Transverse colon (tissue), 4 donors: ENCODE measurements at regions of chr5 and their contacts with region 1.

Region 1: DNA sequence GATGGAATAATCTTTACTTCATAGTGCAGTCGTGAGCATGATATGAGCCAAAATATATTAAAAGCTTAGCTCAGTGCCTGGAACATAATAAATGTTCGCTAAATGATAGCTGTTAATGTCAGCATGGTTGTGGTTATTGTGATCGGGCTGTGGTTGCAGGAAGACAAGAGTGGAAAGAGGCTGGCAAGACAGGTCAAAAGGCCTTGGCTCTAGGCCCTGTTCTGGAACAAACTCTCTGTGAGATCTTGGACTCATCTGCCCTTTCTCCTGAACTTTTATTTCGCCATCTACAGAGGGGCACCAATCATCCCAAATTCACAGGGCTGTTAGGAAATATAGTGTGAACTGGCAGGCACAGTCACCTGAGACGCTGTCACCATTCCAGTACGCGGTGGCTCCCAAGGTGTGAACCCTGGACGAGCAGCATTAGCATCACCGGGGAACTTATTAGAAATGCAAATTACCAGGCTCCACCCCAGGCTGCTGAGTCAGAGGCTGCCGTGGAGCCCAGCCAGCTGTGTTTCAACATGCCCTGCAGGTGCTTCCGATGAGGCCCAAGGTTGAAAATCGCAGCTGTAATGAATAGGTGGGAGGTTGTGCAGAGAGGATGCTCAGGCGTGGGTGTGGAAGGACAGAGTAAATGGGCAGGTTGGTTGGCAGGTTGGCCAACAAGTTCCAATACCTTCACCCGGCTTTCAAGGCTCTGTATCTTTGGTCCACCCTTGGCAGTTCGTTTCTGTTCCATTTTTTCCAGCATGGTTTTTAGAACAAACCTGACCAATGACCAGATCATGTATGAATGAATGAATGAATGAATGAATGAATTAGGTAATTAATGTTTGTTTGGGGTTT is 50.2 kb upstream of the SAP30L start:
- DNase-seq: peak; percentile 47
- H3K4me3 ChIP-seq: no peak overlapping the region
- H3K27ac ChIP-seq: no peak overlapping the region
- H3K4me1 ChIP-seq: peaks cover 0 to 19% (median 2%) of the 10 kb centered on the region in 4 donors
- H3K27me3 ChIP-seq: no peaks in the 10 kb centered on the region
- CTCF ChIP-seq: no peak
- EP300 ChIP-seq: no peak
- POLR2A ChIP-seq: no peak

Region 2: DNA sequence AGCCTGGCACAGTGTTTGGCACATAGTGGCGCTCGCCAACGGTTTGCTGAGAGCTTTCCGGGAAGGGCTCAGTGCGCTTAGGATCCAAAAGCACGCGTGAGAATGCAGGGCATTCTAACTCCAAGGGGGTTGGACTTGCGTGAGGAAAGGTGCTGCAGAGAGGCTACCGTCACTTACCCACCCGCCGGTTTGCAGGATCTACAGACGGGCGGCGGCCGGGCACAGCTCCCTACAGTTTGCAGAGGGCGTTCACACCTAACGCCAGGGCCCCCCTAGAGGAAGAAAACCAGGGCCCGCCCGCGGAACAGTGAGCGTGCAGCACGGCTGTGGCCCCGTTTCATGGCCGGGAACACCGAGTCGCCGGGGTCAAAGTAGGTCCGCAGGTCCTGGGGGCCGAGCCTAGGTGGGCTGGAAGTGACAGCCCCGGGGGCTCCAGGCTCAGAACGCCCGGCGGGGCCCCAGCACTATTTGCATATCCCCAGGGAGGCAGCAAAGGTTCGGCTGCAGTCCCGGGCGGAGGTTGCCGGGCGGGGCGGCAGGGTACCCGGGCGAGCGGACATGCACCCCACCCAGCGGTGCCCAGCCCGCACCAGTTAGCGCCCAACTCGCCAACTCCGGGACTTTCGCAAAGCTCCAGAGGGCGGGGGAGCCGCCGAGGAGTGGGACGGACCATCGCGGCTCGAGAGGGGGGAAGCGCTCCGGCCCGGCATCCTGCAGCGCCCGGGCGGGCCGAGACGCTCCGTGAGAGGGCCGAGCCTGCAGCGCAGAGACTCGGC is 205.6 kb before region 1 on chr5:
- in situ Hi-C with region 1: loop called (anchors 5 to 25 kb)
- intact Hi-C with region 1: no loop called
- DNase-seq: peak; percentile 90
- H3K4me3 ChIP-seq: peak overlapping the region; percentile 59 to 82 (median 72)
- H3K27ac ChIP-seq: peak overlapping the region; percentile 85 to 96 (median 90)
- H3K4me1 ChIP-seq: peaks cover 6 to 39% (median 22%) of the 10 kb centered on the region in 4 donors
- H3K27me3 ChIP-seq: no peaks in the 10 kb centered on the region
- CTCF ChIP-seq: peak; percentile 33 to 79 (median 49)
- EP300 ChIP-seq: no peak
- POLR2A ChIP-seq: peak; percentile 50